Caco-2 (cell line): ENCODE measurements at regions of chr6 and their contacts with region 1.

Region 1: DNA sequence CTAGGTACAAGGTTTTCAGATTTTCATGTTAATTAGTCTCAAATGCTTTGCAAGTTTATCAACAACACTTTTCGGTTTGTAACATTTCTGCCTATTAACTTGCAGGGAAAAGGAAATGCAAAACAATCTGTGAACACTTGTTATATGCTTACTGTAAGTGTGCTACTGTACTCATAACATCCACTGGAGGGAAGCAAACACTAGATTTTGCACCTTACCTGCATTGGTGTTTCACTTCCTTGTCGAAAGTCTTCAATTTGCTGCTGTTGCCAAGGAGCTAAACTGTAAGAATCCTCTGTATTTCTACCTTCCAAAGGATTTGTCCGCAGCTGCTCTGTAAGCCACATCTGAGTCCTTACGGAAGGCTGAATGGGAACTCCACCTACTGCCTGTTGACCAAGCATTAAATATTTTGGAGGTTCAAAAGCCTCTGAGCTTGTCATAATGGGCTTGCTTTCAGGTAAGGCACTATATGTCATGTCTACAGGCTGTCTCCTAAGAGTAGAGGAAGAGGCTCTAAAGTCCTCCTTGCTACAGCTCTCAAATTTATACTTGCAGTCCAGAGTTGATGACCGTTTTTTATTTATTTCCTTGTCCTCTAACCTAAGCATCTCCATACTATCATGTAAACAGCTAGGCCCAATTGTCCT is 17.3 kb downstream of the PLN start:
- DNase-seq: peak in 1 of 2 experiments; percentile 14
- H3K4me3 ChIP-seq: no peak overlapping the region
- H3K4me3 Mint-ChIP-seq: no peak overlapping the region
- H3K27ac Mint-ChIP-seq: no peak overlapping the region
- H3K4me1 ChIP-seq: no peaks in the 10 kb centered on the region
- H3K4me1 Mint-ChIP-seq: no peaks in the 10 kb centered on the region
- H3K27me3 ChIP-seq: no peaks in the 10 kb centered on the region
- H3K27me3 Mint-ChIP-seq: no peaks in the 10 kb centered on the region
- CTCF ChIP-seq: peak; percentile 45 to 52

Region 2: GRCh38 chr6:118580585-118581419 is 15.4 kb after region 1 on chr6:
- CTCF ChIA-PET with region 1: interaction called, 3 read pairs
- POLR2A ChIA-PET with region 1: no interaction called
- intact Hi-C with region 1: loop called (anchors 1 kb)
- DNase-seq: peak; percentile 39 to 50
- H3K4me3 ChIP-seq: no peak overlapping the region
- H3K4me3 Mint-ChIP-seq: no peak overlapping the region
- H3K27ac Mint-ChIP-seq: no peak overlapping the region
- H3K4me1 ChIP-seq: no peaks in the 10 kb centered on the region
- H3K4me1 Mint-ChIP-seq: no peaks in the 10 kb centered on the region
- H3K27me3 ChIP-seq: no peaks in the 10 kb centered on the region
- H3K27me3 Mint-ChIP-seq: no peaks in the 10 kb centered on the region
- CTCF ChIP-seq: peak; percentile 54 to 62

Region 3: GRCh38 chr6:118618679-118619377 is 53.4 kb after region 1 on chr6:
- CTCF ChIA-PET with region 1: interaction called, 3 read pairs
- POLR2A ChIA-PET with region 1: no interaction called
- intact Hi-C with region 1: loop called (anchors 1 kb)
- DNase-seq: peak; percentile 36 to 52
- H3K4me3 ChIP-seq: no peak overlapping the region
- H3K4me3 Mint-ChIP-seq: no peak overlapping the region
- H3K27ac Mint-ChIP-seq: no peak overlapping the region
- H3K4me1 ChIP-seq: no peaks in the 10 kb centered on the region
- H3K4me1 Mint-ChIP-seq: no peaks in the 10 kb centered on the region
- H3K27me3 ChIP-seq: no peaks in the 10 kb centered on the region
- H3K27me3 Mint-ChIP-seq: no peaks in the 10 kb centered on the region
- CTCF ChIP-seq: peak; percentile 75 to 80

Region 4: DNA sequence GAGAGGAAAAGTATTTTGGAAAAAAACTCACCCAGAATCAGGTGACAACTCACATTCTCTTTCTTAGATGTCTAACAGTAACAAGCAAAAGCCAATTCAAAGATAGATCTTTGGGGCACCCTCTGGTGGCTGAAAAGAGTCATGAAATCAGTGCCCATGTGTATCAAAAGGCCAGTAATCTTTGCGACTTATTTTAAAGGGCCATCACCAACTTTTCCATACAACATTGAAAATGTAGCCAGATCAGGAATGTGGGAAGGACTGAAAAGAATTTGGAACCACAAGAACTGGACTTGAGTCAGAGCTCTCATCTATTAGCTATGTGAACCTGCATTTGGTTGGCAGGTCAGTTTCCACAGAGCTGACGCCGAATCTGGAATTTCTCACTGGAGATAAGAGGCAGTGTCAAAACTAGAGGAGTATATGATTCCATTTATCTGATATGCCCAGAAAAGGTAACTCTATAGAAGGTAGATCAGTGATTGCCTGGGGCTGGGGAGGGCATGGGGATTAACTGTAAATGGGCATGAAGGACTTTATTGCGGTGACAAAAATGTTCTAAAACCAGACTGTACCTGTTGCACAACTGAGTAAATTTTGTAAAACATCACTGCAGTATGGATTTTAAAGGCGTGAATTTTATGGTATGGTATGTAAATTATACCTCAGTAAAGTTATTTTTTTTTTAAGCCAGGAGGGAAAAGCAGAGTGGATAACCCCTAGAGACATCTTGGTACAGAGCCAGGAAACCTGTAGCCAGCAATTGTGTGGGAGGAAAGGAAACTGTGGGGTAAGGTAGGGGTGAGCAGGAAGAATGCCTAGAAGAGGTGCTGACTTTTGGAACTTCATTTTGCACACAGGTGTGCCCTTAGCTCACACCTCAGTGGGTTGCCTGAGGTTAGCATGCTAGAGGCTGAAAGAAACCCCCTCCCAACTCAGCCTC is 211.4 kb after region 1 on chr6:
- CTCF ChIA-PET with region 1: no interaction called
- POLR2A ChIA-PET with region 1: no interaction called
- intact Hi-C with region 1: loop called (anchors 1 kb)
- DNase-seq: peak in 1 of 2 experiments; percentile 65
- H3K4me3 ChIP-seq: no peak overlapping the region
- H3K4me3 Mint-ChIP-seq: no peak overlapping the region
- H3K27ac Mint-ChIP-seq: no peak overlapping the region
- H3K4me1 ChIP-seq: no peaks in the 10 kb centered on the region
- H3K4me1 Mint-ChIP-seq: no peaks in the 10 kb centered on the region
- H3K27me3 ChIP-seq: no peaks in the 10 kb centered on the region
- H3K27me3 Mint-ChIP-seq: peaks cover 19% of the 10 kb centered on the region
- CTCF ChIP-seq: peak; percentile 62 to 71

Region 5: DNA sequence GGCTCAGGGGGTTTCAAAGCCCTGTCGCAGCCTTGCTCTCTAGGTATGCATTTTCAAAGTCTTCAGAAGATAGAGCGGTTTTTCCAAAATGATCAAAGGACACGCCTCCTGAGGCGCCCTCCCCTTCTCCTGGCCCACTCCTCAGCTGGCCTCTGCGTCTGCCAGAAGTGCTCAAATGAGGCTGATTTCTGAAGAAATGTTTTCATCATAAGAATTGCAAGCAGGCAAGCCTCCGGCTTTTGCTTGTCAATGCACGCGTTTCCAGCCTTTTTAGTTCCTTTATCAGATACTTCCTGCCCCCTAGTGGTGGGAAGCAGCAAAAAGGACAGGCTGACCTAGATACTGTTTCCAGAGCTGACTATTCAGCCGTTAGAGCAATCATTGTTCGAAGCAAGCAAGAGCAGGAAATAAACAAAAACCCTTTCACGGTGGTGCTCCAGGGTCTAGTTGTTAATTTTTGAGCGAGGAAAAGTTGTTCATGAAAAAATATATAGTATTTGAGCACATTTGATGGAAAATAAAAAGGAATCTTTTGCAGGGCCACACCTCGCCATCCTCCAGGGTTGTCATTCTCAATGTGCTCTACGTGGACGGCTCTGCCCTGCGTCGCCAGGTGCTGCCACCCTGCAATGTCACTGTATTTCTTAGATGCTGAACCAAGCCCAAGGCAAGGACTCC is 235.1 kb after region 1 on chr6:
- CTCF ChIA-PET with region 1: no interaction called
- POLR2A ChIA-PET with region 1: no interaction called
- intact Hi-C with region 1: loop called (anchors 5 kb)
- DNase-seq: peak; percentile 73 to 83
- H3K4me3 ChIP-seq: no peak overlapping the region
- H3K4me3 Mint-ChIP-seq: peak overlapping the region; percentile 16
- H3K27ac Mint-ChIP-seq: no peak overlapping the region
- H3K4me1 ChIP-seq: 0 out of 2 replicates have a peak, but pooled peaks cover 3% of the 10 kb centered on the region
- H3K4me1 Mint-ChIP-seq: peaks cover 18% of the 10 kb centered on the region
- H3K27me3 ChIP-seq: no peaks in the 10 kb centered on the region
- H3K27me3 Mint-ChIP-seq: no peaks in the 10 kb centered on the region
- CTCF ChIP-seq: peak; percentile 74 to 85